Astrocyte of the cerebellum (primary cell): ENCODE measurements at regions of chr10 and their contacts with region 1.

Region 1: DNA sequence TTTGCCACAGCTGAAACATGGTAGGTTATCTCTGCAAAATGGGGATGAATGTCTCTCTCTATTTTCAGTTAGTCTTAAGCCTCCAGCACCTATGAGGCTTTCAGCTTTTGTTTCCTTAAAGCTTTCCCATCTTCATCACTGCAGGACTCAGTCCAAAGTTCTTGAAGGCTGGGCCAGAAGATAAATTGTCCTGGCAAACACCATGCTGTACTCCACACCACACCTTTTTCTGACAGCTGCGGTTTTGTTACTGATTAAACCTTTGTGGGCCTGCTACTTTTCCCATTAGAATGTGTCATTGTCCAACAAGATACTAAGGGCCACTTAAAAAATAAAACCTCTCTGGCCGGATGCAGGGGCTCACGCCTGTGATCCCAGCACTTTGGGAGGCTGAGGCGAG is 87.2 kb upstream of the A1CF start:
- DNase-seq: no peak
- H3K4me3 ChIP-seq: no peak overlapping the region
- CTCF ChIP-seq: no peak

Region 2: GRCh38 chr10:50874723-50875122 is 97.9 kb before region 1 on chr10:
- in situ Hi-C with region 1: no loop called
- DNase-seq: no peak
- H3K4me3 ChIP-seq: no peak overlapping the region
- CTCF ChIP-seq: no peak

Region 3: DNA sequence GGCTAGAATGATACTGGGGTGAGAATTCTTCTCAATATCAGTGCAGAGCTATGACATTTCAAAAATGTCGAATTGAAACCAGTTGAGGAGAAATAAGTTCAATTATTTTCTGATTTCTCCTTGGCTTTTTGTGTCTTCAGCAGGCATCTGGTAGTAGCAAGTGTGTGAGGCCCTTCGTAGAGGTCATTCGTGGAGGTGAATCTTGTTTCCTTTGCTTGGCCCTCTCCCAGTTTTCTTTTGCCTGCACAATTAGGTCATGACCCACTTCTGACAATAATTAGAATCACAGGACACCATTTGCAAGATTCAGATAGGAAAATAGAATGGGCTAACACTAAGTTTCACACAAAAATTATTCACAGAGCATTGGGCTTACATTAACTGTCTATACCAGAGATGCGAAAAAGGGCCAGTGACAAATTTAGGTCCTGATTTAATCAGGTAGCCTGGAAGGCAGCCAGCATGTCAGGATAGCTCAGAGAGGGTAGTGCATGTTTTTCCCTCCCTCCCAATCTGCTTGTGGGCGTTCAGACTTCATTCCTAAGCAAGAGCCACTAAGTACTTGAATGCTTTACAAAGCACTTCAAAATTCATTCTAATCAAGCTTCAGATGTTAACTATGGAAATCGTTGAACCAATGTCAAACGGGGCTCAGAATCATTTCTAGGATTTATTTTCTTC is 63.1 kb before region 1 on chr10:
- in situ Hi-C with region 1: loop called (anchors 5 kb)
- DNase-seq: no peak
- H3K4me3 ChIP-seq: no peak overlapping the region
- CTCF ChIP-seq: no peak

Region 4: DNA sequence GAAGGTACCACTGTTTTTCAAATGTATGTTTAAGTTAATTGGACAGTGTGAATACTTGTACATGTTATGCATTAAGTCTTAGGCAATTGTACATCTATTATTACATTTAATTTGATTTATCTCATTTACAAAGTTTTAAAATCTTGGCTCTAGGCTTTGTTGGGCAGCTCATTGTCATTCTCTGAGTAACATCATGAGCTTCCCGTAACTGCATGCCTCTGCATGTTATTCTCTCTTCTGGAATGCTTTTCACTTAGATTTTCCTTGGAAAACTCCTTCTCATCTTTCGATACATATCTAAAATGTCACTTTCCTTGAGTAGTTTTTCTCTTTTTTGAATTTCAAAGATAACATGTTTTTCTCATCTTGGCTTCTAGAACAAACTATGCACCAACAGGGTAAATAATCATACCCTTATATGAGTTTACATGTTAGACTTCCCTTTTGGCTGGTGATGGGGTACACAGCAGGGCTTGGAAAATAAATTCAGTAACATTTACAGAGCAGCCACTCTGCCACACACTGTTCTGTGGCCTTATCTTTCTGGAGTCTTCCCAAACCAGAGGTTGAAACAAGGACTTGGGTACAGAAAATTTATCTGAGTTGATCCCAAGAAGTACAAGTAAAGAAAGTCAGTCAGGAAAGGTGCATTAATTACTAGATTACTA is 44.9 kb before region 1 on chr10:
- in situ Hi-C with region 1: no loop called
- DNase-seq: no peak
- H3K4me3 ChIP-seq: no peak overlapping the region
- CTCF ChIP-seq: no peak